Left ventricle myocardium inferior (tissue), 1 donor: ENCODE measurements at regions of chr12 and their contacts with region 1.

Region 1: DNA sequence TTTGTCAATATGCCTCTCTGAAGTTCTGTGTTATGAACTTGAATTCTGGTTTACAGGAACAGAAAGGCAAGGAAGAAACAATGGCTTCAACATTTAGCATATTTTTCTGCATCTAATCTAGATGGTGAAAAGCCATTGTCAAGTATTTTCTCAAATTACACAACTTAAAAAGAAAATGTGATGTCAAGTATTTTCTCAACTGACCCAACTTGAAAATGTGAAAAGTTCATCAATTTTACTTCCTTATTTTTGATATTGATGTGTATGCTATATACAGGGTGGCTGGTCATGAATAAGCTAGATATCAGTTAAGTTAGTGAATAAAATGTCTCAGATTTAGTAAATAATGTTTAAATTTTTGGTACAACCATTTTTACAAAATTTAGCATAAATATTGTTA is 196.7 kb downstream of the ALX1 start:
- DNase-seq: no peak
- H3K4me3 ChIP-seq: no peak overlapping the region
- H3K27ac ChIP-seq: no peak overlapping the region
- H3K4me1 ChIP-seq: no peaks in the 10 kb centered on the region
- H3K27me3 ChIP-seq: peaks cover 6% of the 10 kb centered on the region
- CTCF ChIP-seq: no peak

Region 2: DNA sequence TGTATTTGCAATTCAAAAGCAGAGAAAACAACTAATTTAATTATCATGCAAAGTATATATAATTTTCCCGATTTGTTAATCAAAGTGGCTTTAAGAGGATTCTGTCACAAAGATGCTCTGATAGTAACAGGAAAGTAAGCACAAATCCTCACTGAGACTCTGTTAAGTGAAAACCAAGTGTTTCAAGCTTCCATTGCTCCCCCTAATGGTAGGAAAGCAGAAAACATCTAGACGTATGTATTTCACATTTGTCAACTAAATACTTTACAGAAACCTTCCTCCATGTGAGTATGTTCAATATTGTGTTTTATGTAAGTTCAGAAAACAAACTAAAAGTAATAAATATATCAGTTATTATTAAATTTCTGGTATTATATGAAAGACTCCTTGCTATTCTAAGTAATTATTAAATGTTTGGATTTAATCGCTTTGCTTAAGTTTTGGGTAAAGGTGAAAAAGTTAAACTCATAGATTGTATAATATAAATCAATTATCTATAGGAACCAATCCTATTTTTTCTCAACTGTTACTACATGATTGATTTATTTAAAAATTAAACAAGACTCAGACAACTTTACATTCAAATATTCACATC is 395.8 kb after region 1 on chr12:
- intact Hi-C with region 1: loop called (anchors 5 kb)
- DNase-seq: no peak
- H3K4me3 ChIP-seq: no peak overlapping the region
- H3K27ac ChIP-seq: no peak overlapping the region
- H3K4me1 ChIP-seq: no peaks in the 10 kb centered on the region
- H3K27me3 ChIP-seq: peaks cover 7% of the 10 kb centered on the region
- CTCF ChIP-seq: peak; percentile 82